CD4-positive, alpha-beta T cell (primary cell): ENCODE measurements at regions of chr6 and their contacts with region 1.

Region 1: DNA sequence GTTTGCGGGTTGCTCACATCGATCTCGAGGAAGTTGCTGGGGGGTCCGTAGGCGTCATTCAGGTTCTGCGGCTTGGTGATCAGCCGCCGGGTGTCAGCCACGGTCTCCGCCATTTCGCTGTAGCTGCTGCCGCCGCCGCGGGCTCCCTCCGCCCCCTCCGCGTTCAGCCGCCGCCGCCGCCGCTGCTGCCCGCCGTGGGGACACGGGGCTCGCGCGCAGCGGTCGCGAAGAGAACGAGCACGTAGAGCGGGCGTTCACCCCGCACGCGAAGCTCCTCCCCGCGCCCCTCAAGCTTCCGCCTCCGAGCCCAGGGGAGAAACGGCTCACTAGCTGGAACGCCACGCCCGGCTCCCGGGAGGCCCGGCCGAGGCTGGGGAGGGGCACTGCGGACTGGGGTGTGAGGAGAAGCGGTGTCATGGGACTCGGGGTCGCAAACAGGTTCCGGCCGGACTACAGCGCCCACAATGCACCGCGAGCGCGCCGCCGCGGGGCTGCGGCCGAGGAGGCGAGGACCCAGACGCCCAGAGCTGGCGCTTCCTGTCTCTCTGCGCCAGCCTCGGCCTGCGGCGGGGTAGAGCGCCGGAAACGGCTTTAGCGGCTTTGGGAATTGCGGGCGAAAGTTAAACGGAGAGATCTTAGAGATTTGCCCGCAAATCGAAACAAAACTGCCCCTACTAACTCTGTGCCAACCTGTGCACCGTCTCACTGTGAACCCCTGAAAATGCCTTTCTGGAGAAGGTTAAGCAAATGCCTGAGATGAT is at the start of gene SNX3:
- DNase-seq: peak; percentile 71 to 95 (median 83)
- ATAC-seq: peak; percentile 80
- H3K4me3 ChIP-seq: peak within 1 kb of the TSS; percentile 98
- H3K4me3 Mint-ChIP-seq: peak within 1 kb of the TSS; percentile 88
- H3K27ac ChIP-seq: peak within 1 kb of the TSS; percentile 88 to 90
- H3K27ac Mint-ChIP-seq: peak within 1 kb of the TSS; percentile 91
- H3K4me1 ChIP-seq: peaks cover 34% of the 10 kb centered on the region
- H3K4me1 Mint-ChIP-seq: peaks cover 36% of the 10 kb centered on the region
- H3K27me3 ChIP-seq: no peaks in the 10 kb centered on the region
- H3K27me3 Mint-ChIP-seq: no peaks in the 10 kb centered on the region
- CTCF ChIP-seq: no peak
- total RNA-seq, gene SNX3: 39.8 to 40.8 TPM

Region 2: GRCh38 chr6:107026965-107027364 is 1234.0 kb before region 1 on chr6:
- CTCF ChIA-PET with region 1: no interaction called
- POLR2A ChIA-PET with region 1: no interaction called
- intact Hi-C with region 1: loop called in 1 of 2 experiments (anchors 5 kb)
- DNase-seq: no peak
- ATAC-seq: no peak
- H3K4me3 ChIP-seq: no peak overlapping the region
- H3K4me3 Mint-ChIP-seq: peak overlapping the region; percentile 76
- H3K27ac ChIP-seq: no peak overlapping the region
- H3K27ac Mint-ChIP-seq: no peak overlapping the region
- H3K4me1 ChIP-seq: peaks cover 22% of the 10 kb centered on the region
- H3K4me1 Mint-ChIP-seq: peaks cover 27% of the 10 kb centered on the region
- H3K27me3 ChIP-seq: no peaks in the 10 kb centered on the region
- H3K27me3 Mint-ChIP-seq: no peaks in the 10 kb centered on the region
- CTCF ChIP-seq: no peak

Region 3: GRCh38 chr6:107059611-107060010 is 1201.4 kb before region 1 on chr6:
- CTCF ChIA-PET with region 1: no interaction called
- POLR2A ChIA-PET with region 1: no interaction called
- intact Hi-C with region 1: no loop called
- DNase-seq: no peak
- ATAC-seq: no peak
- H3K4me3 ChIP-seq: no peak overlapping the region
- H3K4me3 Mint-ChIP-seq: no peak overlapping the region
- H3K27ac ChIP-seq: no peak overlapping the region
- H3K27ac Mint-ChIP-seq: no peak overlapping the region
- H3K4me1 ChIP-seq: peaks cover 19% of the 10 kb centered on the region
- H3K4me1 Mint-ChIP-seq: peaks cover 23% of the 10 kb centered on the region
- H3K27me3 ChIP-seq: no peaks in the 10 kb centered on the region
- H3K27me3 Mint-ChIP-seq: no peaks in the 10 kb centered on the region
- CTCF ChIP-seq: no peak

Region 4: DNA sequence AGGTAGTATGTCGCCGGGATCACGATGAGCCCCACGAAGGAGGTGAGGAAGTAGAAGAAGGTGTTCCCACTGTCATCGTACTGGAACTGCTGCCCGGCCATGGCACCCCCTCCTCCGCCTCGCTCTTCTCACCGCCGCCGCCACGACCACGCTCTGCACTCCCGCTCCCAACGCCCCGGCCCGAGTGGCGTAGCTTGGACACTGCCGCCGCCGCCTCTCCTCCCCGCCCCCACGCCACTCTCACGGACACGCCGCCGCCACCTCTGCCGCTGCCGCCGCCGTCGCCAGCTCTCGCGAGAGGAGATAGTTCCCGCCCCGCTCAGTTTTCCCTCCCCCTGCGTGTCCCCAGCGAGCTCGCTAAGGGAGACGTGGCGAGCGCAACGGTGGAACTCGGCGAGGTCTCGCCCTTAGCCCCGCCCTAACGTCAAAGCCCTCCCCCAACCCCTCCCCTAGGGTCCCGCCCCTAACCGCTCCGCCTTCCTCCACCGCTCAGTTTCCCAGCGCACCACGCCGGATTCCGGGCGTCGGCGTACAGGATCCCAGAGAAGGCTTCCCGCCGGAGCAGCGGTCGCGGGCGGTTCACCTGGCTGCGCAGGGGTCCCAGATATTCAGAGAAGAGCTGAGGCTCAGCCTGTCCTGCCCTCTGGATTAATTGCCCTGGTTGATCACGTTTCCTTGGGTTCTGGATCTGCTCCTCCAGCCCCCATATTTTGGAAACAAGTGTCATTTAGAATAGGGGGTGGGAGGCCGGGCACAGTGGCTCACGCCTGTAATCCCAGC is 302.9 kb before region 1 on chr6 and contains the start of gene SEC63:
- CTCF ChIA-PET with region 1: no interaction called
- POLR2A ChIA-PET with region 1: interaction called, 17 read pairs
- intact Hi-C with region 1: loop called in 1 of 2 experiments (anchors 2 kb)
- DNase-seq: peak; percentile 94 to 98 (median 97)
- ATAC-seq: peak; percentile 97
- H3K4me3 ChIP-seq: peak within 1 kb of the TSS; percentile 81
- H3K4me3 Mint-ChIP-seq: peak within 1 kb of the TSS; percentile 99
- H3K27ac ChIP-seq: peak within 1 kb of the TSS; percentile 46 to 61
- H3K27ac Mint-ChIP-seq: peak within 1 kb of the TSS; percentile 82
- H3K4me1 ChIP-seq: peaks cover 16% of the 10 kb centered on the region
- H3K4me1 Mint-ChIP-seq: peaks cover 32% of the 10 kb centered on the region
- H3K27me3 ChIP-seq: no peaks in the 10 kb centered on the region
- H3K27me3 Mint-ChIP-seq: no peaks in the 10 kb centered on the region
- CTCF ChIP-seq: no peak
- total RNA-seq, gene SEC63: 80.3 to 86.7 TPM

Region 5: GRCh38 chr6:108250240-108250866 is 10.6 kb before region 1 on chr6:
- CTCF ChIA-PET with region 1: interaction called, 3 read pairs
- POLR2A ChIA-PET with region 1: interaction called, 16 read pairs
- intact Hi-C with region 1: no loop called
- DNase-seq: peak in 1 of 14 experiments; percentile 22
- ATAC-seq: peak; percentile 43
- H3K4me3 ChIP-seq: no peak overlapping the region
- H3K4me3 Mint-ChIP-seq: no peak overlapping the region
- H3K27ac ChIP-seq: no peak overlapping the region
- H3K27ac Mint-ChIP-seq: no peak overlapping the region
- H3K4me1 ChIP-seq: peaks cover 14% of the 10 kb centered on the region
- H3K4me1 Mint-ChIP-seq: peaks cover 67% of the 10 kb centered on the region
- H3K27me3 ChIP-seq: no peaks in the 10 kb centered on the region
- H3K27me3 Mint-ChIP-seq: no peaks in the 10 kb centered on the region
- CTCF ChIP-seq: no peak